ENCODE measurements at regions of chr17 and their contacts with region 1.

Region 1: GRCh38 chr17:32755045-32755805 is 121.7 kb downstream of the MYO1D start:
- DNase-seq: peak in 20 of 42 donors; percentile 10 to 62 (median 32)

Region 2: DNA sequence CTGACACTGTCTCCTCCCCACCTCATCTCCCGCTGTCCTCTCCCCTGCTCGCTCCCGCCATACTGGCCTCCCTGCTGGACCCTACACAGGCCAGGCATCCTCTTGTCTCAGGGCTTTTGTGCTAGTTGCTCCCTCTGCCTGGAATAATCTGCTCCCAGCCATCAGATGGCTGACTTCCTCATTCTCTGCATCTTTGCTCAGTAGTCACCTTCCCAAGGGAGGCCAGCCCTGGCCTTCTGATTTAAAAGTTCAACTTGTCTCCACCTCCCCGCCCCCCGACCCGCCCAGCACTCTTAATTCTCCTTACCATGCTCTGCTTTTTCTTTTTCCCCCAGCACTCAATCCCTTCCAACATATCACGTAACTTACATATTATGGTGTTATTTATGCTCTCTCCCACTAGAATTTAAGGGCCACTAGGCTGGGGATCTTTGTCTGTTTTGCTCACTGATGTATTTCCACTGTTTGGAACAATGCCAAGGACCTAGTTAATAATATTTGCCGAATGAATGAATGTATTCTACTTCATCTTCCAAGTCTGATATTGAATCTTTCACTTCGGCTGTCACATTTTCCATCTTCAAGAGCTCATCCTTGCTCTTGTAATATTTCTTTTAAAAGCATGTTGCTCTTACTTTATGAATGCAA is 90.2 kb before region 1 on chr17:
- intact Hi-C with region 1: loop called (anchors 5 kb)
- DNase-seq: no peak